Head of caudate nucleus (tissue), 42 donors: ENCODE measurements at regions of chr6 and their contacts with region 1.

Region 1: GRCh38 chr6:44074439-44075136 is 52.7 kb downstream of the MRPL14 start:
- DNase-seq: peak; percentile 56 to 90 (median 80)

Region 2: DNA sequence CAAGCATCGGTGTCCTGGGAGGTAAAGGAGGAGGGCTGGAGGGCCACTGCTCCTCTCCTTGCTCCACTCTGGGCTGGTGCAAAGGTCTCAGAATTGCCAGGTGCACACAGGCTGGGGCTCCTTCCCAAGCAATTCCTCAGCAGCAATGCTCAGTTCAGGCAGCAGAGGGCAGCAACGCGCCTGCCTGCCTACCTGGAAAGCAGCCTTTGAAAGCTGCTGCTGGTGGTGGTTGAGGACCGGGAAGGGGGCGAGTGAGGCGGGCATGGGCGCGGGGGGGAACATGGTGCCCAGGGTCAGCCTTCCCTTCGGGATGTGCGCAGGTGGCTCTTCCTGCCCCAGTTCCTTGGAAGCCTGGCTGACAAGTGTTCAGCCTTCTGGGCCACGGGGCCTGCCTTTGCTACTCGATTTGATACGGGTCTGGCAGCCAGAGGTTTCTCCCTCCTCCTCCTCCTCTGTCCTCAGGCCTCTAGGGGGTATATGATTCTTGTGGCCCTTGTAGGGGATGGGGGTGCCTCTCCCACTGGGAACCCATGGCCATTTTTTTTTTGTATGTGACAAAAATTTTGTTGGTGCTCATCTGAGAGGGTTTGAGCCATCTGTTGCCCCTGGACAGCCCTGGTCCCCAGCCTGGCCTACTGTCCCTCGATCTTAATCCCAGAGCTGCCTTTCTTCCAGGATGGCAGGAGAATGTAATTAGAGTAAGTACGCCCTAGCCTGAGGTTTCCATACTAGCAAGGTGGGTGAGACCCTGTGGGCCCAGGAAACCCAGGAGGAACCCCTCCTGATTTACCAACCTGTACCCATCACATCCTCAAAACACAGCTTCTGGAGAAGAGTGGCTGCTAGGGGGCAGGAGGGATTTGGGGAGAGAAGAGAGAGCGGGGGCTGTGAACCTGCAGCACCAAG is 407.1 kb before region 1 on chr6:
- intact Hi-C with region 1: loop called (anchors 5 kb)
- DNase-seq: peak; percentile 75 to 94 (median 89)

Region 3: DNA sequence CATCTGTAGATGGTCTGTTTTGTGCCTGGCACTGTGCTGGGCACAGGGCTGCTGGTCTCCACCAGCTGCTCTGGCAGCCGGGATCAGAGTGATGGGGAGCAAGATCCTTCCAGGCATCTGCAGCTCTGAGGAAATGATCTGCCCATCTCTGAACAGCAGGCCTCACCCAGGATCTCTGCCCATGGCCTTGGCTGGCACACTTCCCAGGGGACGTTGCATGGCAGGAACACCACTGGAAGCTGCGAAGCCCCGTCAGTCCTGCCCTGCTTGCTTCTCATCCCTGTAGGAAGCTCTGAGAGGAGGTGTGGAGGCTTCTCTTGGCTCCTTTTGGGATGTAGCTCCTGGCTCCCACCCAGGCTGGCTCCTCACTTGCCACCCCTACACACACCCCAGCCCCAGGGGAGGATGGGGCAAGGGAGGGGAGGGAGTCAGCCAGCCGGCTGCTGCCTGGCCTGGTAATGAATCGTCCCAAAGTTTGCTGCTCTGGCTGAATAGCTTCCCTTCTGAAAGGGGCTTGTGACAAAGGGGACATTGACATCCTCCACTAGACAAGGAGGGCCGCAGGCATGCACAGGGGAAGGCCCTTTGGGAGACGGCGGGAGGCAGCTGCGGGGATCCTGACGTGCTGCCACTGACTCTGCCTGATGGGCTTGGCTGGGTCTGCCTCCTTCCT is 195.6 kb before region 1 on chr6:
- intact Hi-C with region 1: loop called (anchors 10 kb)
- DNase-seq: peak; percentile 52 to 87 (median 70)